HCT116 (cell line): ENCODE measurements at regions of chr2 and their contacts with region 1.

Region 1: DNA sequence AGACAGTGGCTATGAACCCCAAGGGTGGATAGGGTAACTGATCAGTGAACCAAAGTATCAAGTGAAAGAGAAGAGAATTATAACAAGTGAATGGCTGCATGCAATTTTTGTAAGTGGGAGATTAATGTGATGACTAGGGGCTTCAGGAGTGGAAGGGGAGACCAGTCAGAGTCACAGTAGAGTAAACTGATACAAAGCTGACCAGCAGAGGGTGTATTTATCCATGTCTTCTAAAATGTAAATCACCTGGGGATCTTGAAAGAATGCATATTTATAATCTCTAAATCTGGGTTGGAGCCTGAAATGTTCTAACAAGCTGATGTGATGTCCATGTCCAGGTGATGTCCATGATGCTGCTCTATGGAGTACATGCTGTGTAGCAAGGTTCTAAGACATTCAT is 1351.3 kb upstream of the CHAC2 start:
- DNase-seq: peak; percentile 8
- ATAC-seq: peak; percentile 73
- H3K4me3 ChIP-seq: no peak overlapping the region
- H3K27ac ChIP-seq: no peak overlapping the region
- H3K4me1 ChIP-seq: no peaks in the 10 kb centered on the region
- H3K27me3 ChIP-seq: no peaks in the 10 kb centered on the region
- CTCF ChIP-seq: peak in 2 of 3 experiments; percentile 13 to 59; a peak in 4 of 6 replicates
- POLR2A ChIP-seq: no peak
- RAD21 ChIP-seq: peak; percentile 63

Region 2: DNA sequence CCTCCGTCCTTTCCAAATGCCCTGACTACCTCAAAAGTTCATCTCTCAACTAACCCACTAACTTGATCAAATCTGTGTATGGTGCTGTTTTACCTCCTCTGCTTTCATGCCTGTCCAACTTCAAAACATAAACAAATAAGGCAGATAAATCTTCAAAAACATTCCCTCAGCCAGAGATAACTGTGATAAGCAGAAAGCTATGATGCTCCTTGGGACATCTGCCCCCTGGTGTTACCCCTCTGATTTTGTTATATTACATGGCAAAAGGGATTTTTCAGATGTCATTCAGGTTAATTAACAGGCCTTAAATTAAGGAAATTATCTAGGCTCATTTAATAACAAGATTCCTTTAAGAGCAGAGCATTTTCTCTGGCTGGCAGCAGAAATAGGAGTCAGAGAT is 540.4 kb after region 1 on chr2:
- CTCF ChIA-PET with region 1: no interaction called
- POLR2A ChIA-PET with region 1: no interaction called
- RAD21 ChIA-PET with region 1: no interaction called
- intact Hi-C with region 1: loop called (anchors 5 kb)
- DNase-seq: no peak
- ATAC-seq: no peak
- H3K4me3 ChIP-seq: no peak overlapping the region
- H3K27ac ChIP-seq: no peak overlapping the region
- H3K4me1 ChIP-seq: no peaks in the 10 kb centered on the region
- H3K27me3 ChIP-seq: no peaks in the 10 kb centered on the region
- CTCF ChIP-seq: peak; percentile 30 to 55 (median 43); a peak in 5 of 6 replicates
- POLR2A ChIP-seq: no peak
- RAD21 ChIP-seq: peak; percentile 57

Region 3: DNA sequence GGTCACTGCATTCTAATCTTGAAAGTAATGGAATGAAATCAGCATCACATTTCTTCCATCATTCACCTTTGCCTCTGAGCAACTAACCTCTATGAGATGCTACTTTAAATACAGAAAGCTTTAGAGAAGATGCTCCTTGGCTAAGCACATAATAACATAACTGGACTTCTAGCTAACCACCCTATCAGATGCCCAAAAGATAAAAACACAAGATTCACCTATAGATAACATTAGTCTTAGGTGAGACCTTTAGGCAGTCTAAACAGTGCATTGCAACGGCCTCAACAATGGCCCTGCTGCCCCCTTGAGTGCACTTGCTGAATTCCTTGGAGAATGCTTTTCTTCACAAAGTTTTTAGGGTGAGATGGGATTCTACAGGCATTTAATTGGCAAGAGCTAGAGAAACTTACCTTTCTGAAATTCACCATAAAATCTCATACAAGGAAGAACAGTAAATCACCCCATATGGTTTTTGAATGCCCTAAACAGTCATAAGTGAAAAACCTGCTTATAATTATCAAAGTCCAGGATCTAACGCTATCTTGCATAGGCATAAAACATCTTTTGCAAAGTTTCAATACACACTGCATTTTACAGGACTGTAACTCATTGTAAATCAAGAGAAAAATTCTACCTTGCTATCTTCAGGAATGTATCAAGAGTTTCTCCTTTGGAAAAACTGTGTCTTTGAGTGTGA is 560.1 kb after region 1 on chr2:
- CTCF ChIA-PET with region 1: interaction called, 4 read pairs
- POLR2A ChIA-PET with region 1: no interaction called
- RAD21 ChIA-PET with region 1: no interaction called
- intact Hi-C with region 1: loop called (anchors 1 kb)
- DNase-seq: peak; percentile 36
- ATAC-seq: peak; percentile 92
- H3K4me3 ChIP-seq: no peak overlapping the region
- H3K27ac ChIP-seq: no peak overlapping the region
- H3K4me1 ChIP-seq: no peaks in the 10 kb centered on the region
- H3K27me3 ChIP-seq: no peaks in the 10 kb centered on the region
- CTCF ChIP-seq: peak; percentile 62 to 91 (median 79); a peak in 5 of 6 replicates
- POLR2A ChIP-seq: no peak
- RAD21 ChIP-seq: peak; percentile 87

Region 4: GRCh38 chr2:53202063-53202462 is 785.7 kb after region 1 on chr2:
- CTCF ChIA-PET with region 1: interaction called, 3 read pairs
- POLR2A ChIA-PET with region 1: no interaction called
- RAD21 ChIA-PET with region 1: no interaction called
- intact Hi-C with region 1: loop called (anchors 1 kb)
- DNase-seq: peak; percentile 54
- ATAC-seq: peak; percentile 90
- H3K4me3 ChIP-seq: no peak overlapping the region
- H3K27ac ChIP-seq: no peak overlapping the region
- H3K4me1 ChIP-seq: peaks cover 3% of the 10 kb centered on the region in 2 experiments; a peak in 2 of 4 replicates
- H3K27me3 ChIP-seq: no peaks in the 10 kb centered on the region
- CTCF ChIP-seq: peak; percentile 20 to 46 (median 41); a peak in 4 of 6 replicates
- POLR2A ChIP-seq: no peak
- RAD21 ChIP-seq: peak; percentile 80